ENCODE measurements at regions of chr21 and their contacts with region 1.

Region 1: DNA sequence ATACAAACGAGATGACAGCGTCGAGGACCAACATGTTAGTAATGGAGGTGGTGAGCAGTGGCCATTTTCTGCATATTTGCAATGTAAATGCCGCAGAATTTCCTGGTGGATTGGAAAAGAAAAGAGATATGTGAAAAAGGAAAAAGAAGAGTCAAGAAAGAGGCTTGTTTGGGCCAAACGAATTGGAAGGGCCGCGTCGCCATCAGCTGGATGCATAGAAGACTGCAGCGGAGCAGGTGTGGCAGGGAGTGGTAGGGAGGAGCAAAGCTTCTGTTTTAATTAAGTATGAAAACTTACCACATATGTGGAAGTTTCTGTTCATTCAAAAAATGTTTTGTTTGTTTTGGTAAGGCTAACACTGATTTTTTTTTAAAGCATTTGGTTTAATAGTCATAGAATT is 690.7 kb downstream of the NCAM2 start:
- DNase-seq: no peak
- H3K4me3 ChIP-seq: no peak overlapping the region
- H3K27ac ChIP-seq: no peak overlapping the region
- H3K4me1 ChIP-seq: no peaks in the 10 kb centered on the region
- H3K27me3 ChIP-seq: no peaks in the 10 kb centered on the region
- CTCF ChIP-seq: no peak
- POLR2A ChIP-seq: no peak

Region 2: GRCh38 chr21:22106720-22107410 is 418.0 kb after region 1 on chr21:
- intact Hi-C with region 1: loop called (anchors 5 kb)
- DNase-seq: no peak
- H3K4me3 ChIP-seq: no peak overlapping the region
- H3K27ac ChIP-seq: no peak overlapping the region
- H3K4me1 ChIP-seq: no peaks in the 10 kb centered on the region
- H3K27me3 ChIP-seq: no peaks in the 10 kb centered on the region
- CTCF ChIP-seq: no peak
- POLR2A ChIP-seq: no peak

Region 3: DNA sequence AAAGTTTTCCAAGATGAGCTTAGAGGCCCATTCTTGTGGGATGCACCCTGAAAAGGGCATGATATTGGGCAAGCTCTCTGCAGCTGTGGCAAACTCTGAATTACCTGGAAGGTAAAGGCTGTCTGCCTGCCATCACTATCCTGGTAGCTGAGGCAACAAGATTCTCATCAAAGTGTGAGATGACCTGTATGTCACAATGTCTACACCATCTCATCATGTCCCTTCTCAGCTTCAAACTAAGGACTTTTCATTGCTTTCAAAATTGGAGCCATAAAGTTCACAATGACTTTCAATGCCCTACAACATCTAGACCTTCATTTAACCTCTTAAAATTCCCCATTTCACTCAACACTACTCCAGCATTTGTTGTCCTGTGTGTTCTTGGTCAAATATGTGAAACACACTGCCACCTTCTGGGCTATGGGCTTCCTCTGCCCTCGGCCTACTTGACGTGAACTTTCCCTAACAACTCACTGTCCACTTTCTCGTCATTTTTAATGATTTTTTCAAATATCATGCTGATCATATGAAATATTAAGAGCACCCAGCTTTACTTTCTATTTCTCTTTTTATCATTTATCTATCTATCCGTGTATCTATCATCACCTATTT is 1327.6 kb after region 1 on chr21:
- intact Hi-C with region 1: no loop called
- DNase-seq: no peak
- H3K4me3 ChIP-seq: no peak overlapping the region
- H3K27ac ChIP-seq: no peak overlapping the region
- H3K4me1 ChIP-seq: no peaks in the 10 kb centered on the region
- H3K27me3 ChIP-seq: no peaks in the 10 kb centered on the region
- CTCF ChIP-seq: no peak
- POLR2A ChIP-seq: no peak

Measured in breast epithelium (tissue), 4 donors.